IMR-90 (cell line): ENCODE measurements at regions of chr1 and their contacts with region 1.

Region 1: DNA sequence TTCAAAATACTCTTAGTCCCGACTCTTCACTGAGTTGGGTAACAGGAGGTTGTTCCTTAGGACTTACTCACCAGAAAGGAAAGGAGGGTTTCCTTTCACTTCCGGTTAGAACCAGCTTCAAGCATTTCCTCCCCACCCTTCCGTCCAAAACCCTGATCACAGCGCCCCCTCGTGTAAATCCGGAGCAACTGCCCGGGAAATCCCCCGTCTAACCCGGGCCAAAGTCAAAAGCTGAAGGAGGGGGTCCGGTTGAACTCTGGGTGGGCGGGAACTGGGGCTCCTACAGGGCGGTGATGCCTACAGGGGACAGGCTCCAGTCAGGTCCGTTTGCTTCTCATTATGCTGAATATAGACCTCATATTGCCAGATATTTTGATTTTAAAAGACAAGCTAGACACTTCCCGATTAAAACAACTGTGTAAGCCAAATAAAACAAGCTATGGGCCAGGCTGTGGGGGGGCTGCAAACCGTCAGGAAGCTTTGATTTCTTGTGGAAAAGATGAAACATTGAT is 15.0 kb upstream of the MTARC2 start:
- DNase-seq: peak; percentile 88
- ATAC-seq: peak; percentile 70
- H3K4me3 ChIP-seq: no peak overlapping the region
- H3K27ac ChIP-seq: 0 out of 2 replicates have a peak overlapping the region, but pooled peaks have one; percentile 26
- H3K4me1 ChIP-seq: peaks cover 5% of the 10 kb centered on the region
- H3K27me3 ChIP-seq: no peaks in the 10 kb centered on the region
- CTCF ChIP-seq: peak; percentile 71
- POLR2A ChIP-seq: no peak
- RAD21 ChIP-seq: peak; percentile 49

Region 2: DNA sequence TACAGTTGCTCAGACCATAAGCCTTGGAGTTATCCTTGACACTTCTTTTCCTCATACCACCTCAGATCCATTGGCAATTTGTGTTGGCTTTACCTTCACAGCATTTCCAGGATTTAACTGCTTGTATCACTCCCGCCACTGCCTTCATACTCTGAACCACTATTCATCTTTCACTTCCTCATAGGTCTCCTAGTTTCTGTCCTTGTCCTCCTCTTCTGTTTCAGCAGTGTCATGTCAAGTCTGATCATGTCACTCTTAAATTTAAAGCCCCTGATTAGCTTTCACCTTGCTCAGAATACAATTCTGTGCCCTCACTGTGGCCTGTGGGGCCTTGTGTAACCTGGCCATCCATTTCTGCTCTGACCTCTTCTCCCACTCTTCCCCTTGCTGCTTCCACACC is 77.6 kb before region 1 on chr1:
- CTCF ChIA-PET with region 1: no interaction called
- POLR2A ChIA-PET with region 1: no interaction called
- dilution Hi-C with region 1: no loop called
- in situ Hi-C with region 1: no loop called
- intact Hi-C with region 1: no loop called
- DNase-seq: no peak
- ATAC-seq: no peak
- H3K4me3 ChIP-seq: no peak overlapping the region
- H3K27ac ChIP-seq: no peak overlapping the region
- H3K4me1 ChIP-seq: no peaks in the 10 kb centered on the region
- H3K27me3 ChIP-seq: peaks cover 2% of the 10 kb centered on the region
- CTCF ChIP-seq: no peak
- POLR2A ChIP-seq: no peak
- RAD21 ChIP-seq: no peak

Region 3: DNA sequence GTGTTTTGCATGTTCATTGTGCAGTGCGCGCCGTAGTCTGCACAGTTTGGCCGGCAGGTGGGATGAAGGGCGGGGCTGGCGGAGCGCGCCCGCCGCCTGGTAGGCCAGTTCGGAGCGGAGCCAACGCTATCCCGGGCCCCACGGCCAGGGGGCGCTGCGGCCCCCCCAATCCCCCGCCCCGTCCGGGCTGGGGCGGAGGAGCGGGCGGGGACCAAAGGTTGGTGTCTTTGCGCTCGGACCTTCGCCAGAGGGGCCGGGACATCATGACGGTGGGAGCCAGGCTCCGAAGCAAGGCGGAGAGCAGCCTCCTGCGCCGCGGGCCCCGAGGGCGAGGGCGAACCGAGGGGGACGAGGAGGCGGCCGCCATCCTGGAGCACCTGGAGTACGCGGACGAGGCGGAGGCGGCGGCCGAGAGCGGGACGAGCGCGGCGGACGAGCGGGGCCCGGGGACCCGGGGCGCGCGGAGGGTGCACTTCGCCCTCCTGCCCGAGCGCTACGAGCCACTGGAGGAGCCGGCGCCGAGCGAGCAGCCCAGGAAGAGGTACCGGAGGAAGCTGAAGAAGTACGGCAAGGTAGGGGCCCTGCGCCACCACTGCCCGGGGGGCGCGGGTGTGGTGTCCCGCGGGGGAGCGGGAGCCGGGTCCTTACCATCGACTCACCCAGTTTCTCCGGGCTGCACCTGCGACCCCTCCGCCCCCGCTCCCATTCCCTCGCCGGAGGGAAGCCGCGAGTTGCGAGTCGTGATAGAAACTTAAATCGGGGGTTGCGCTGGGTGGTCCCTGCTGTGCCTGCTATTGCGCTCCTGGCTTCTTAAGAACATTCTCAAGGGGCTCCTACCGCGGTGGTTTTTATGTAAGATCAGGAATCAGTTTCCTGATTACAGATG is 42.8 kb before region 1 on chr1 and contains the start of gene C1orf115:
- CTCF ChIA-PET with region 1: interaction called, 3 read pairs
- POLR2A ChIA-PET with region 1: no interaction called
- dilution Hi-C with region 1: no loop called
- in situ Hi-C with region 1: no loop called
- intact Hi-C with region 1: loop called (anchors 1 kb)
- DNase-seq: peak; percentile 13
- ATAC-seq: peak; percentile 93
- H3K4me3 ChIP-seq: peak within 1 kb of the TSS; percentile 76
- H3K27ac ChIP-seq: no peak within 1 kb of the TSS
- H3K4me1 ChIP-seq: no peaks in the 10 kb centered on the region
- H3K27me3 ChIP-seq: peaks cover 36% of the 10 kb centered on the region
- CTCF ChIP-seq: peak; percentile 68
- POLR2A ChIP-seq: no peak
- RAD21 ChIP-seq: peak; percentile 38
- total RNA-seq, gene C1orf115: under 0.01 and 0.18 TPM in 2 replicates